ENCODE measurements at regions of chr18 and their contacts with region 1.

Region 1: DNA sequence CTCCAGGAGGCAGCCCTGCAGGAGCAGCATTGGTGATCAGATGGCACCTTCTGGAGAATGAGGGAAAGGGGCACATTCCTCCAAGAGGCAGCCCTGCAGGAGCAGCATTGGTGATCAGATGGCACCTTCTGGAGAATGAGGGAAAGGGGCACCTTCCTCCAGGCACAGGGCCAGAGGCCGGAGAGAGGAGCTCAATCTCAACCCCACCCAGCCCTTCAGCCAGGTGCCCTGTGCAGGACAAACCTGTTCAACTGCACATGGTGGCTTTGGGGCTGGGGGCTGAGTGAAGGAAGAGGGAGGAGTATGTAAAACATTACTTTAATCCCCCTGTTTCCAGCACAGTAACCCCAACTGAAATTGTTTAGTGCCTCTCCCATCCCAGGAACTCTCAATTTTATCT is 22.9 kb upstream of the PHLPP1 start:
- DNase-seq: peak in 1 of 2 experiments; percentile 7
- H3K4me3 ChIP-seq: no peak overlapping the region
- H3K27ac ChIP-seq: no peak overlapping the region
- H3K4me1 ChIP-seq: peaks cover 10% of the 10 kb centered on the region
- H3K27me3 ChIP-seq: no peaks in the 10 kb centered on the region
- CTCF ChIP-seq: no peak

Region 2: DNA sequence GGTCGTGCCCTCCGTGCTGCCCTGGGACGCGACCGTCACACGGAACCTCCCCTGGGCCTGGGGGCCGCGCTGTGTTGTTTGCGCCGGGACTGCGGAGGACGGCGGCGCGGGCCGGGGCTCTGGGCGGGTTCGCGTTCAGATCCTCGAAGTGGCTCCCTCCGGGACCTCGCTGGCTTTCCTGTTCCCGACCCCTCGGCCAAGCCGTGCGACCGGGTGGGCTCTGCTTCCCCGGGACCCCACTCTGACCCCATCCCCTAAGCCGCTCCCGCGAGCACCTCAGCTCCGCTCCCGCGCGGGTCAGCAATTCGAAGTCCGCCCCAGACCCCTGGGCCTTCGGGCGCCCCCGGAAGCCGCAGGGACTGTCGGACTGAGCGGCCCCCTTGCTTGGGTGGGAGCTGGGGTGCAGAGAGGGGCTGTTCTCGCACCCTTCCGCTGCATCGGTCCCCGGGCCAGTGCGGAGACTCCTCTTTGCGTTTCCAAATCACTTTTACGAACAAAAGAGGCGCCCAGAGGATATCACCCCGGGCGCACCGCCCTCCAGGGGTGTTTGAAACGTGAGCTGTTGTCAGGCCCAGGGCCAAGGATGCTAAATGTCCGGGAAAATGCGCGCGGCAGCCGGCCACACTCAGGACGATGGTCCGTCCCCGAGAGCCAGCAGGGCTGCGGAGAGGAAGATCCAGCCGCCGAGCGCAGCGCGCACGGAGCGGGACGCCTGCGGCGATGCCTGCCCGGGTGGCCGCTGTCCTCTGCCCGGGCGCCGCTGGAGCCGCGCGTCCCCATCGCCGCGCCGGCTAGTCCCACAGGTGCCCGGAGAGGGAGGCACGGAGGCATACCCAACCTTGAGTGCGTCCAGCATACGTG is 96.0 kb before region 1 on chr18:
- CTCF ChIA-PET with region 1: no interaction called
- POLR2A ChIA-PET with region 1: no interaction called
- intact Hi-C with region 1: no loop called
- DNase-seq: peak in 1 of 2 experiments; percentile 18
- H3K4me3 ChIP-seq: no peak overlapping the region
- H3K27ac ChIP-seq: no peak overlapping the region
- H3K4me1 ChIP-seq: no peaks in the 10 kb centered on the region
- H3K27me3 ChIP-seq: no peaks in the 10 kb centered on the region
- CTCF ChIP-seq: no peak

Region 3: GRCh38 chr18:63071566-63072175 is 379.3 kb after region 1 on chr18:
- CTCF ChIA-PET with region 1: no interaction called
- POLR2A ChIA-PET with region 1: interaction called, 10 read pairs
- intact Hi-C with region 1: no loop called
- DNase-seq: peak; percentile 11 to 88
- H3K4me3 ChIP-seq: peak overlapping the region; percentile 17; the same call in 1 of the 2 replicates
- H3K27ac ChIP-seq: peak overlapping the region; percentile 46
- H3K4me1 ChIP-seq: peaks cover 38% of the 10 kb centered on the region
- H3K27me3 ChIP-seq: no peaks in the 10 kb centered on the region
- CTCF ChIP-seq: no peak

Measured in PC-9 (cell line).